ENCODE measurements at regions of chr12 and their contacts with region 1.

Region 1: GRCh38 chr12:31659087-31659933 is at the start of gene ETFBKMT:
- DNase-seq: peak; percentile 95
- H3K4me3 Mint-ChIP-seq: peak within 1 kb of the TSS; percentile 73
- H3K27ac Mint-ChIP-seq: peak within 1 kb of the TSS; percentile 58
- H3K4me1 Mint-ChIP-seq: peaks cover 8% of the 10 kb centered on the region
- H3K27me3 Mint-ChIP-seq: no peaks in the 10 kb centered on the region
- CTCF ChIP-seq: no peak
- total RNA-seq, gene ETFBKMT: 2.2 and 2.3 TPM in 2 replicates

Region 2: DNA sequence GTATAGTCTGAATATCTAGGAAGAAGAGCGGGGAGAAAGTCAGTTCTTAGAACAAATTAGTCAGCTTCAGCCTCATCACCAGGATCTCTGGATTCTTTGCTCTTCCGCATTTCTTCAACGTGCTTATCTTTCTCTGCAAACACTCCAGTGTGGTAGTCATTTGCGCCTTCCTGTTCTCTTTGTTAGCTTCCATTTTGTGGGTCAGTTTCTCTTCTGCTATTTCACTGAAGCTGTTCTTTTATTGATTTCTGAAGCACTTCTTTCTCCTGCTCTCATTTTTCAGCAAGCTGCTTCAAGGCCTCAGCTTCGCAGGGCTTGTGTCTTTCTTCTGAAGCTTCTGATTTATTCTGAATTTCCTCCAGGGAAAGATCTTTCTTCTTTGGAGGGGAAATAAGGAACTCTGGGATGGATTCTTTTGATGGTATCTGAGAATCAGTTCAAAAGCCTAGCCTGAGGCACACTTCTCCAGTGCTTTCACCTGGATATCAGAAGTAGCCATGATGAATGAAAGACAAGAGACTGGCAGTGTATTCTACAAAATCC is 56.0 kb after region 1 on chr12:
- CTCF ChIA-PET with region 1: no interaction called
- intact Hi-C with region 1: no loop called
- DNase-seq: peak; percentile 32
- H3K4me3 Mint-ChIP-seq: peak overlapping the region; percentile 51
- H3K27ac Mint-ChIP-seq: peak overlapping the region; percentile 98
- H3K4me1 Mint-ChIP-seq: peaks cover 27% of the 10 kb centered on the region
- H3K27me3 Mint-ChIP-seq: no peaks in the 10 kb centered on the region
- CTCF ChIP-seq: no peak

Region 3: GRCh38 chr12:32069071-32069470 is 409.8 kb after region 1 on chr12:
- CTCF ChIA-PET with region 1: no interaction called
- intact Hi-C with region 1: loop called (anchors 10 kb)
- DNase-seq: no peak
- H3K4me3 Mint-ChIP-seq: peak overlapping the region; percentile 31
- H3K27ac Mint-ChIP-seq: peak overlapping the region; percentile 92
- H3K4me1 Mint-ChIP-seq: peaks cover 17% of the 10 kb centered on the region
- H3K27me3 Mint-ChIP-seq: no peaks in the 10 kb centered on the region
- CTCF ChIP-seq: no peak

Region 4: DNA sequence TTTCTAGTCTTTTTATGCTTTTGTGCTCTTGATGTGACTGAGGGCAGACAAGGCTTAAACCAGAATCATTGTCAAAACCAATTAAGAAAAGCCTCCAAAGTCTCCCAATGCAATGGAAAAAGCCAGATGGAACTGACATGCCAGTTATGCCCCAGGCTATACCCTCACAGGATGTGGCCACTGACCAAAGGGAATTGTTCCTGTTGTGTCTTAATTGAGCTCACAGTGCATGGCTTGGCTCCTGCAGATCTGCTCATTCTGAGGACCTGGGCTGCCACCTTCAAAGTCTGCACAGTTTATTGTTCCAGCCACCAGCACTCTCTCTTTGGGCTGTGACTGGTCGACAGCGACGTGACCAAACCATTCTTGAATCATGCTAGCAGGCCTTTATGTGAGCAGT is 430.3 kb after region 1 on chr12:
- CTCF ChIA-PET with region 1: no interaction called
- intact Hi-C with region 1: no loop called
- DNase-seq: no peak
- H3K4me3 Mint-ChIP-seq: no peak overlapping the region
- H3K27ac Mint-ChIP-seq: no peak overlapping the region
- H3K4me1 Mint-ChIP-seq: no peaks in the 10 kb centered on the region
- H3K27me3 Mint-ChIP-seq: no peaks in the 10 kb centered on the region
- CTCF ChIP-seq: no peak